ENCODE measurements at regions of chr6 and their contacts with region 1.

Region 1: DNA sequence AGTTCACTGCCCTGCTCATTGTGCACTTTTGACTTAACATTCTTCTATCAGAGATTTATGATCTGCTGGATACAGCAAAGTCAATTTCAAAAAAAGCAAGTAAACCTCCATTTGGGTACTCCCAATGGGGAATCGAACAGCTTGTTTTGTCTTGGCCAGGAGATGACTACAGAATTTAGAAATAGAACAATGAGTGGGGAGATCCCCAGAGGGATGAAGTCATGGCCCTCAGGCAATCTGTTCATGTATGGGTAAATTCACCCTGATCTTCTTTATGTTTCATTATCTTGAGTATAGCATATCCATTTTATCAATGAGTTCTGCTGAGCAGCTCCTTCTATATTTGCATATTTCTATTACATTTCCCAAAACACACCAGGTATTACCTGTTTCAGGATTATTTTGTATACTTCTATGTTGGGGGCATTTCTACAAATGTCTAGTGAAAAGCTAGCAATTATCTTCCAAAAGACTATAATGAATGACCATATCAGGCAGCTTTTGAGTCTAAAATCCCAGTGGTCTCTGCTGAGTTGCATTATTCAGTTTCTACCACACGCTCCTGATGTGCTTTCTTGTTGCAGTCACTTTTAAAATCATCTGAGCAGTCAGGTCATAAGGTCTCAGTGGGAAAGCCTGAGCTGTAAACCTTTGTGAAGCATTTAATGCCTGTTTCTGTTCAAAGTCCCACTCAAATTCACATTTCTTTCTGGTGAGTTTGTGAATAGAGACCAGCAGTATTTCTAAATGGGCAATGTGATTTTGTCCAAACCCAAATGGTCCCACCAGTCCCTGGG is 1681.7 kb downstream of the HACE1 start:
- DNase-seq: no peak
- H3K4me3 ChIP-seq: no peak overlapping the region
- H3K27ac ChIP-seq: no peak overlapping the region
- H3K4me1 ChIP-seq: no peaks in the 10 kb centered on the region
- H3K27me3 ChIP-seq: no peaks in the 10 kb centered on the region
- CTCF ChIP-seq: no peak
- EP300 ChIP-seq: no peak
- POLR2A ChIP-seq: no peak

Region 2: DNA sequence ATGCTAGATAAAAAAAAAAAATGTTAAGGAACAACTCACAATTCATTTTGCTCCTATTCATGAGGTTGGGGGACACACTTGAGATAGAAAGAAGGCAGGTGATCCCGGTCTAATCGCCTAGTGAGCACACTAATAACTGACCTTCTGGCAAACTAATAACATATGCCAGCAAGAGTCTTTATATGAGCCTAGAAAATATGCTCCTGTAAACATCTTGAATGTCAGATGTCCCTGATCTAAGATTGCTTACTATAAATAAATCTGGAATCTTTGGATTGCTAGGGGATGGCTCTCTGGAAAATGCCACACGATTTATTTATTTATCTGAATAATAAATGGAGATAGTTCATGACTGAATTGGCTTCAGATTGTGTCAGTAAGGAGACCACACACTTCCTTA is 962.6 kb before region 1 on chr6:
- intact Hi-C with region 1: loop called (anchors 5 kb)
- DNase-seq: no peak
- H3K4me3 ChIP-seq: no peak overlapping the region
- H3K27ac ChIP-seq: no peak overlapping the region
- H3K4me1 ChIP-seq: no peaks in the 10 kb centered on the region
- H3K27me3 ChIP-seq: no peaks in the 10 kb centered on the region
- CTCF ChIP-seq: no peak
- EP300 ChIP-seq: no peak
- POLR2A ChIP-seq: no peak

Region 3: DNA sequence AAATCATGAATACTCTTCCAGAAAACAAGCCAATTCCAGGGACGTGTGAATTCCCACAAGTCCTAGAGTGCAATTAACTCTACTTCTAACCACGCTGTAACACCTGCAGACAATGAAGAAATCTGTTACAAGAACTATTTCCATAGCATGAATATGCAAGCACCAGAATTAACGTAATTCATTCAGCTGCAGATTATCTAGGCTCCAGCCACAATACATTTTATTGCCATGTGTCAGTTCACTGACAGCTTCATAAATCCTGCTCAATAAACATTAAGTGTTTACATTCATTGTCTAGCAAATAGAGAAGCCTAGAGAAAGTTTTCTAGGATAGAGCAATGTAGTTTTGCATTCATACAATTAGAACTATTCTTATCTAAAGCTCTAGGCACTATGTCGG is 436.0 kb before region 1 on chr6:
- intact Hi-C with region 1: no loop called
- DNase-seq: no peak
- H3K4me3 ChIP-seq: no peak overlapping the region
- H3K27ac ChIP-seq: no peak overlapping the region
- H3K4me1 ChIP-seq: no peaks in the 10 kb centered on the region
- H3K27me3 ChIP-seq: no peaks in the 10 kb centered on the region
- CTCF ChIP-seq: no peak
- EP300 ChIP-seq: no peak
- POLR2A ChIP-seq: no peak

Measured in sigmoid colon (tissue), 7 donors.